Activated CD4-positive, alpha-beta T cell treated with anti-CD3 and anti-CD28 coated beads for 36 hours (primary cell): ENCODE measurements at regions of chr6 and their contacts with region 1.

Region 1: GRCh38 chr6:152982768-152983636 is at the start of gene FBXO5:
- DNase-seq: peak; percentile 98
- ATAC-seq: peak; percentile 89
- H3K4me3 Mint-ChIP-seq: peak within 1 kb of the TSS; percentile 90
- H3K27ac Mint-ChIP-seq: peak within 1 kb of the TSS; percentile 100
- H3K4me1 Mint-ChIP-seq: peaks cover 34% of the 10 kb centered on the region
- H3K27me3 Mint-ChIP-seq: no peaks in the 10 kb centered on the region
- total RNA-seq, gene FBXO5: 48.7 to 57.3 TPM

Region 2: GRCh38 chr6:152170705-152171667 is 812.0 kb before region 1 on chr6:
- CTCF ChIA-PET with region 1: no interaction called
- POLR2A ChIA-PET with region 1: no interaction called
- intact Hi-C with region 1: loop called in 1 of 2 experiments (anchors 5 kb)
- DNase-seq: peak; percentile 80
- ATAC-seq: peak; percentile 94
- H3K4me3 Mint-ChIP-seq: peak overlapping the region; percentile 53
- H3K27ac Mint-ChIP-seq: peak overlapping the region; percentile 96
- H3K4me1 Mint-ChIP-seq: peaks cover 51% of the 10 kb centered on the region
- H3K27me3 Mint-ChIP-seq: no peaks in the 10 kb centered on the region

Region 3: DNA sequence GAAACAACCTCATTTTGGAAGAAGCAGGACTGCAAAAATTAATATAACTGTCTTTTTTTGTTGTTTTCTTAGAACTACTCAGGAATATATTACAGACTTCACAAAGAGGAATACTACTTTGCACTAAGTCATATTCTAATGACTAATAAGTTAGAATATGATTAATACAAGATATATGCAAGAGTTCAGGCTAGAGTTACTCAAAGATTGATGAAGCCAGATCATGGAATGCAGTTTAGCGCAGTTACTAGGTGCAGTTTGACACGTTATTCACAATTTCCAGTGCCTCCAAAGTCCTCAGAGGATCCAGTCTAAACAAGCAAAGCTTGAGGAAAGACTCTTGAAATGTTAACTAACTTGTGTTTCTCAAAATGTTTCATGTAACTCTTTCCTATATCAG is 286.5 kb before region 1 on chr6:
- CTCF ChIA-PET with region 1: no interaction called
- POLR2A ChIA-PET with region 1: no interaction called
- intact Hi-C with region 1: no loop called
- DNase-seq: no peak
- ATAC-seq: no peak
- H3K4me3 Mint-ChIP-seq: no peak overlapping the region
- H3K27ac Mint-ChIP-seq: no peak overlapping the region
- H3K4me1 Mint-ChIP-seq: no peaks in the 10 kb centered on the region
- H3K27me3 Mint-ChIP-seq: peaks cover 18% of the 10 kb centered on the region

Region 4: GRCh38 chr6:152879681-152880080 is 103.3 kb before region 1 on chr6:
- CTCF ChIA-PET with region 1: no interaction called
- POLR2A ChIA-PET with region 1: no interaction called
- intact Hi-C with region 1: no loop called
- DNase-seq: no peak
- ATAC-seq: no peak
- H3K4me3 Mint-ChIP-seq: no peak overlapping the region
- H3K27ac Mint-ChIP-seq: no peak overlapping the region
- H3K4me1 Mint-ChIP-seq: no peaks in the 10 kb centered on the region
- H3K27me3 Mint-ChIP-seq: peaks cover 14% of the 10 kb centered on the region

Region 5: DNA sequence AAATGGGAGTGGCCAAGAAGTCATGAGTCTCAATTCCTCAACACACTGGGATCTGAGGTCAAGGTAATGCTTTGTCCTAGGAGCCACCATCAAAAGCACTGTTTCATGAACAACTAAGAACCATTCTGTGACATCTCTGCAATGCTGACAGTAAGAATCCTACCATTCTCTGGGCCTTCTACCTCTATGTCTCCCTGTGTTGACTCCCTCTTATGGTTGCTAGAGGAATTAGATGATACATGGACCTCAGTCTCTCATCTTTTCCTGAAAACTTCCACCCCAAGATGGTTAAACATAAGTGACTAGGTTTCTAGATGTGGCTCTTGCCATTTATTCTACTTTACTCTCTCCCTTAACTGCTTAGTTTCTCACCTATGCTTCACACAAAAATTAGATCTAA is 10.4 kb after region 1 on chr6:
- CTCF ChIA-PET with region 1: interaction called, 4 read pairs
- POLR2A ChIA-PET with region 1: no interaction called
- intact Hi-C with region 1: loop called in 1 of 2 experiments (anchors 1 kb)
- DNase-seq: no peak
- ATAC-seq: peak; percentile 79
- H3K4me3 Mint-ChIP-seq: no peak overlapping the region
- H3K27ac Mint-ChIP-seq: peak overlapping the region; percentile 90
- H3K4me1 Mint-ChIP-seq: peaks cover 43% of the 10 kb centered on the region
- H3K27me3 Mint-ChIP-seq: no peaks in the 10 kb centered on the region

Region 6: DNA sequence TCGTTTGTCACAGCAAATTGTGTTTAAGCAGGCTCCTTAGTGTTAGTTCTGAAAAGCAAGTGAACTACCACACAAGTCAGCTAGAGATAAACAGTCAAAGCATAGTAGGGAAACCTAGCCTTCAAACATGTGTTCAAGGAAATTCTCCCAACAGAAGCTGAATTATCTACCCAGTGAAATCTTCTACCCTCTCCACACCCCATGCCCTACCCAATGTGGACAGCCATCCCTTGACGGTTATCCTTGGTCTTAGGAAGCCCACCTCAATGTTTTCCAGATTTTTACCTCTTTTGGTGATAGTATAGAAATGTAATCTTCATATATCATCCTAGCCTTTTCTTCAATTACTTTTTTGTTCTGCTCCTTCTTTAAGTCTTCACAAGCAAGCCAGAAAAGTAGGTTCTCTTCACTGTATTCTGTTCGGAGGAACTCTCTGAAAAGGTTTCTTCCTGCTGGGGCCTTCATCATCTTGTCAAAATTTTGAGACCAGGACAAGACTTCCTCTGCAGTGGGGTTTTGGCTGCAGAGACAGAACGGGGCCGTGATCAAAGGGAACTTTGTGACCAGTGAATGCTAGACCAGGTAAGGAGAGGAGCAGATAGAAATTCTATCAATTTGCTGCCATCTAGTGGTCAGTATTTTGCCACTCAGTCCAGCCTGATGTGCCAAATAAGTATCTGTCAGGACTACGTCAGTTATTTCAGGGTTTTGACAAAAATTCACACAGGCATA is 41.1 kb after region 1 on chr6:
- CTCF ChIA-PET with region 1: interaction called, 3 read pairs
- POLR2A ChIA-PET with region 1: no interaction called
- intact Hi-C with region 1: loop called in 1 of 2 experiments (anchors 1 kb)
- DNase-seq: peak; percentile 53
- ATAC-seq: peak; percentile 93
- H3K4me3 Mint-ChIP-seq: no peak overlapping the region
- H3K27ac Mint-ChIP-seq: no peak overlapping the region
- H3K4me1 Mint-ChIP-seq: no peaks in the 10 kb centered on the region
- H3K27me3 Mint-ChIP-seq: peaks cover 19% of the 10 kb centered on the region

Region 7: DNA sequence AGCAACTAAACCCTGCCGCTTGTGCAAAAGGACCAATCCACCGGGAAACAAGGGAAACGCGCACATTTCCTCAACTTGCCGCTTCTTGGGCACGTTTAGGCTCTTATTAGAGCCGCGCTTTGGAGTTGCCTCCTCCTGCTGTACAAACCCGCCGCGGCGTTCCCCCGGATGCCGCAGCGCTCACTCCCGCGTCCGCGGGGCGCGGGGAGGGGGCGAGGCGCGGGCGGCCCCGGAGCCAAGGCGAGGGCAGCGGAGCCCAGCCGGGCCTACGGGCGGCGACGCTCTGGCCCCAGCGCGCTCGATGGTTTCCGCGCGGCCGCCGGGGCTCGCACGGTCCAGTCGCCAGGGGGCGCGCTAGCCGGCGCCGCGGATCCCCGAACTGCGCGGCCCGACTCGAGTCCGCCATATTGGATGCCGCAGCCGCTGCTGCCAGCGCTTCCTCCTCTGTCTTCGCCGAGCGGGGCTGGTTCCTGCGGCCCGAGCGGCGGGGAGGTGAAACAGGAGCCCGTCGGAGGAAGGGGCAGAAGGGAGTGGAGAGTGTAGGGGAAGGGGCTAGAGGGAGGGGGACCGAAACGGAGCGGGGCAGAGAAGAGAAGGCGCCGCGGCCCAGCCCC is 1750.1 kb after region 1 on chr6 and contains the start of gene SCAF8:
- CTCF ChIA-PET with region 1: no interaction called
- POLR2A ChIA-PET with region 1: no interaction called
- intact Hi-C with region 1: loop called (anchors 1 to 10 kb)
- DNase-seq: peak; percentile 90
- ATAC-seq: peak; percentile 78
- H3K4me3 Mint-ChIP-seq: peak within 1 kb of the TSS; percentile 86
- H3K27ac Mint-ChIP-seq: peak within 1 kb of the TSS; percentile 94
- H3K4me1 Mint-ChIP-seq: peaks cover 42% of the 10 kb centered on the region
- H3K27me3 Mint-ChIP-seq: no peaks in the 10 kb centered on the region
- total RNA-seq, gene SCAF8: 33.9 to 44.5 TPM